ENCODE measurements at regions of chr3 and their contacts with region 1.

Region 1: GRCh38 chr3:110314512-110315114 is 757.0 kb upstream of the NECTIN3 start:
- DNase-seq: peak; percentile 62
- ATAC-seq: no peak
- H3K4me3 ChIP-seq: no peak overlapping the region
- H3K4me3 Mint-ChIP-seq: no peak overlapping the region
- H3K27ac ChIP-seq: no peak overlapping the region
- H3K27ac Mint-ChIP-seq: no peak overlapping the region
- H3K4me1 ChIP-seq: peaks cover 0 to 3% of the 10 kb centered on the region in 2 donors
- H3K4me1 Mint-ChIP-seq: no peaks in the 10 kb centered on the region
- H3K27me3 ChIP-seq: no peaks in the 10 kb centered on the region
- H3K27me3 Mint-ChIP-seq: no peaks in the 10 kb centered on the region
- CTCF ChIP-seq: peak; percentile 89

Region 2: DNA sequence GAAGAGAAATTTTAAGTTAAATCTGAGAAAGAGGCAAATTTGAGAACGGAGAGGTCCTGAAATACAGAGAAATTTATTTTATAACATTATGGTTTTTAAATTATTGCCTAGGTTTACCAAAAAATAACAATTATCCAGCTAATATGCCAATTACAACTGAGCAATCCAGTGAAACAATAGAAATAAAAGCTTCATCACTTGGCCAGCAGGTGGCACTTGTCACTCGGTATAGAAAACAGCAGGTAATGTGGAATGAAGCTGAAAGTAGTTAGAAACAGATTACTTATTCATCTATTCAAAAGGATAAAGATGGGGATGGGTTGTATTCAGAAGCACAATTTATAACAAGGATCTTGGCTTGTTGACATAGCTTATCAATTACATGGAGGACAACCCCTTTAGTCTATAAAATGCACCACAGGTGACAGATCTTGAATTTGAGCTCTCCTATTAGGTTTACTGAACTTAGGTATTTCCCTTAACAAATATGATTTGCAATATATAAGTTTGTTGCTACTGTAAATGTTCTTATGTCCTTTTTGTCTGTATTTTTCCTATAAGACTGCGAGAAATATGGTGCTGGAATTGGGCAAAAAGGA is 1290.9 kb before region 1 on chr3:
- CTCF ChIA-PET with region 1: interaction called, 3 read pairs
- POLR2A ChIA-PET with region 1: no interaction called
- intact Hi-C with region 1: loop called (anchors 10 kb)
- DNase-seq: peak; percentile 57
- ATAC-seq: peak; percentile 28
- H3K4me3 ChIP-seq: no peak overlapping the region
- H3K4me3 Mint-ChIP-seq: no peak overlapping the region
- H3K27ac ChIP-seq: no peak overlapping the region
- H3K27ac Mint-ChIP-seq: no peak overlapping the region
- H3K4me1 ChIP-seq: no peaks in the 10 kb centered on the region
- H3K4me1 Mint-ChIP-seq: no peaks in the 10 kb centered on the region
- H3K27me3 ChIP-seq: no peaks in the 10 kb centered on the region
- H3K27me3 Mint-ChIP-seq: peaks cover 5% of the 10 kb centered on the region
- CTCF ChIP-seq: peak; percentile 88

Region 3: GRCh38 chr3:110301781-110302180 is 12.8 kb before region 1 on chr3:
- CTCF ChIA-PET with region 1: interaction called, 13 read pairs
- POLR2A ChIA-PET with region 1: no interaction called
- intact Hi-C with region 1: no loop called
- DNase-seq: no peak
- ATAC-seq: no peak
- H3K4me3 ChIP-seq: no peak overlapping the region
- H3K4me3 Mint-ChIP-seq: no peak overlapping the region
- H3K27ac ChIP-seq: no peak overlapping the region
- H3K27ac Mint-ChIP-seq: no peak overlapping the region
- H3K4me1 ChIP-seq: no peaks in the 10 kb centered on the region
- H3K4me1 Mint-ChIP-seq: no peaks in the 10 kb centered on the region
- H3K27me3 ChIP-seq: no peaks in the 10 kb centered on the region
- H3K27me3 Mint-ChIP-seq: no peaks in the 10 kb centered on the region
- CTCF ChIP-seq: no peak

Region 4: DNA sequence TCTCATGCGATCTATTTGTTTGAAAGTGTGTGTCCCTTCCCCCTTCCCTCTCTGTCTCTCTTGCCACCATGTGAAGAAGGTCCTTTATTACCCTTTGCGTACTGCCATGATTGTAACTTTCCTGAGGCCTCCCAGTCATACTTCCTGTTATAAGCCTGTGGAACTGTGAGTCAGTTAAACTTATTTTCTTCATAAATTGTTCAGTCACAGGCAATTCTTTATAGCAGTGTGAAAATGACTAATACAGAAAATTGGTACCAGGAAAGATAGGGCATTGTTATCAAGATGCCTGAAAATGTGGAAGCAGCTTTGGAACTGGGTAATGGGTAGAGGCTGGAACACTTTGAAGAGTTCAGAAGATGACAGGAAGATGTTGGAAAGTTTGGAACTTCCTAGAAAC is 13.3 kb after region 1 on chr3:
- CTCF ChIA-PET with region 1: interaction called, 10 read pairs
- POLR2A ChIA-PET with region 1: no interaction called
- intact Hi-C with region 1: no loop called
- DNase-seq: no peak
- ATAC-seq: no peak
- H3K4me3 ChIP-seq: no peak overlapping the region
- H3K4me3 Mint-ChIP-seq: no peak overlapping the region
- H3K27ac ChIP-seq: no peak overlapping the region
- H3K27ac Mint-ChIP-seq: no peak overlapping the region
- H3K4me1 ChIP-seq: no peaks in the 10 kb centered on the region
- H3K4me1 Mint-ChIP-seq: no peaks in the 10 kb centered on the region
- H3K27me3 ChIP-seq: no peaks in the 10 kb centered on the region
- H3K27me3 Mint-ChIP-seq: no peaks in the 10 kb centered on the region
- CTCF ChIP-seq: no peak

Region 5: GRCh38 chr3:111539351-111540331 is 1225.0 kb after region 1 on chr3:
- CTCF ChIA-PET with region 1: interaction called, 19 read pairs
- POLR2A ChIA-PET with region 1: no interaction called
- intact Hi-C with region 1: loop called (anchors 5 kb)
- DNase-seq: peak; percentile 77
- ATAC-seq: peak; percentile 85
- H3K4me3 ChIP-seq: peak overlapping the region; percentile 12 to 64 (median 49)
- H3K4me3 Mint-ChIP-seq: peak overlapping the region; percentile 75
- H3K27ac ChIP-seq: no peak overlapping the region
- H3K27ac Mint-ChIP-seq: peak overlapping the region; percentile 28
- H3K4me1 ChIP-seq: peaks cover 37 to 51% of the 10 kb centered on the region in 2 donors
- H3K4me1 Mint-ChIP-seq: peaks cover 62% of the 10 kb centered on the region
- H3K27me3 ChIP-seq: no peaks in the 10 kb centered on the region
- H3K27me3 Mint-ChIP-seq: no peaks in the 10 kb centered on the region
- CTCF ChIP-seq: peak; percentile 79